K562 (cell line): ENCODE measurements at regions of chr5 and their contacts with region 1.

Region 1: GRCh38 chr5:52948418-52949076 is 40.6 kb upstream of the ITGA2 start:
- DNase-seq: peak; percentile 22 to 57 (median 27)
- ATAC-seq: peak; percentile 94
- H3K4me3 ChIP-seq: no peak overlapping the region
- H3K27ac ChIP-seq: no peak overlapping the region
- H3K4me1 ChIP-seq: no peaks in the 10 kb centered on the region
- H3K27me3 ChIP-seq: peaks cover 0 to 4% of the 10 kb centered on the region in 2 experiments; a peak in 2 of 5 replicates
- CTCF ChIP-seq: peak; percentile 62 to 78 (median 63)
- EP300 ChIP-seq: no peak
- POLR2A ChIP-seq: no peak
- RAD21 ChIP-seq: peak; percentile 86 to 87

Region 2: DNA sequence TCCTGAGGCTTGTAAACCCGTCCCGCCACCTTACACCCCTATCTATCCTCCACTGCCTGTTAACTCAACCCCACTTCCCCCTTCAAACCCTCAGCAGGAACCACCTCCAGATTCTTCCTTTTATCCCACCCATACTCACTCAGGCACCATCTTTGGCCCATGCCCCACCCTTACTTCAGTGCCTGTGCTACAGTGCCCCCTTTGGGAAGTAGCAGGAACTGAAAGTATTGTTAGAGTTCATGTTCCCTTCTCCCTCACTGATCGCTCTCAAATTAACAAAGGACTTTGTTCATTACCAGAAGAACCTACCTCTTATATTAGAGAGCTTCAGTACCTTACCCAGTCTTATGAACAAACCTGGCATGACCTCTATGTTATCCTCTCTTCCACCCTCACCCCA is 253.2 kb after region 1 on chr5:
- CTCF ChIA-PET with region 1: no interaction called
- POLR2A ChIA-PET with region 1: no interaction called
- in situ Hi-C with region 1: no loop called
- intact Hi-C with region 1: loop called (anchors 2 kb)
- DNase-seq: peak; percentile 22 to 56 (median 27)
- ATAC-seq: peak; percentile 68
- H3K4me3 ChIP-seq: no peak overlapping the region
- H3K27ac ChIP-seq: no peak overlapping the region
- H3K4me1 ChIP-seq: no peaks in the 10 kb centered on the region; a peak in 1 of 5 replicates
- H3K27me3 ChIP-seq: peaks cover 0 to 26% of the 10 kb centered on the region in 2 experiments; a peak in 3 of 5 replicates
- CTCF ChIP-seq: peak; percentile 69 to 73 (median 73)
- EP300 ChIP-seq: no peak
- POLR2A ChIP-seq: no peak
- RAD21 ChIP-seq: peak in 1 of 2 experiments; percentile 69; a peak in 2 of 4 replicates

Region 3: DNA sequence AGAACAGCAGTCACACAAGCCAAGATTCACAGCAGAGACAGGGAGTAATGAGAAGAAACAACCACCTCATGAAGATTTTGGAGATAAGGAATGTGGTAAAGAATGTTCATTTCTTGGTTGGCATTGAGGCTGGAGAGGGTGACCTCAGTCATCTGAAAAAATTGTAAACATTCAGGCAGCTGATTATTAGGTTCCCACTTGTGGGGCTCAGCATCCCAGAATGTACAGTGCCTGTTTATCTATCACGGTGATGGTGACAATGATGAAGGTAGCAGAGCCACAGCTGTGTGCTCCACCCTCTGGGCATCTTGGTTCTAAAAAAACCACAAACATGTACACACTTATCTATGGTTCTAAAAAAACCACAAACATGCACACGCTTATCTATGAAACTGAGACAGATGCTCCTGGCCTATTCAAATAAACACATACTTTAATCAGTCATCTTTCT is 304.9 kb after region 1 on chr5:
- CTCF ChIA-PET with region 1: no interaction called
- POLR2A ChIA-PET with region 1: no interaction called
- in situ Hi-C with region 1: no loop called
- intact Hi-C with region 1: no loop called
- DNase-seq: peak in 1 of 4 experiments; percentile 15
- ATAC-seq: no peak
- H3K4me3 ChIP-seq: no peak overlapping the region
- H3K27ac ChIP-seq: no peak overlapping the region
- H3K4me1 ChIP-seq: no peaks in the 10 kb centered on the region
- H3K27me3 ChIP-seq: peaks cover 0 to 6% of the 10 kb centered on the region in 2 experiments; a peak in 1 of 5 replicates
- CTCF ChIP-seq: no peak
- EP300 ChIP-seq: no peak
- POLR2A ChIP-seq: no peak
- RAD21 ChIP-seq: no peak